ENCODE measurements at regions of chr10 and their contacts with region 1.

Region 1: GRCh38 chr10:119199231-119199992 is 8.0 kb upstream of the GRK5 start:
- DNase-seq: peak; percentile 86
- H3K4me3 Mint-ChIP-seq: peak overlapping the region; percentile 10
- H3K27ac Mint-ChIP-seq: no peak overlapping the region
- H3K4me1 Mint-ChIP-seq: peaks cover 34% of the 10 kb centered on the region
- H3K27me3 Mint-ChIP-seq: no peaks in the 10 kb centered on the region

Region 2: GRCh38 chr10:119139464-119140067 is 59.8 kb before region 1 on chr10:
- intact Hi-C with region 1: loop called (anchors 5 kb)
- DNase-seq: peak; percentile 85
- H3K4me3 Mint-ChIP-seq: no peak overlapping the region
- H3K27ac Mint-ChIP-seq: peak overlapping the region; percentile 55
- H3K4me1 Mint-ChIP-seq: peaks cover 19% of the 10 kb centered on the region
- H3K27me3 Mint-ChIP-seq: no peaks in the 10 kb centered on the region

Region 3: DNA sequence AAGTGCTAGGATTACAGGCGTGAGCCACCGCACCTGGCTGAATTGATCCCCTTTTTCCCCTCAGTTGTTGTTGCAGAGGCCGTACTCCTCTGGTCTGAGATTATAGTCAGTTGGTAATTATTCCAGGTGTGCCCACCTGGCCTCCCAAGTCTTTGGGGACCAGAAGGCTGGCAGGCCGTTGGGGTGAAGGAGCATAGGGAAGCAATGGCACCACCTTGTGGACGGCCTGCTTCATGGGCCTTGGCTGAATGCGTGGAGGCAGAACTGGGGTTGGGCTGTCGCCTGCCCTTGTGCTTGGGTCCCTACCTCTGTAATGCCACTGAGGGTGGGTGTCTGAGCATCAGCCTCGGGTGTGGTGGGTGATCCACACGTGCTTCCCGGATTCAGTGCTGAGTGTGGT is 217.4 kb after region 1 on chr10:
- intact Hi-C with region 1: loop called (anchors 1 kb)
- DNase-seq: peak; percentile 90
- H3K4me3 Mint-ChIP-seq: no peak overlapping the region
- H3K27ac Mint-ChIP-seq: no peak overlapping the region
- H3K4me1 Mint-ChIP-seq: peaks cover 1% of the 10 kb centered on the region
- H3K27me3 Mint-ChIP-seq: no peaks in the 10 kb centered on the region

Region 4: GRCh38 chr10:119445311-119445934 is 246.0 kb after region 1 on chr10:
- intact Hi-C with region 1: loop called (anchors 1 kb)
- DNase-seq: peak; percentile 95
- H3K4me3 Mint-ChIP-seq: no peak overlapping the region
- H3K27ac Mint-ChIP-seq: no peak overlapping the region
- H3K4me1 Mint-ChIP-seq: peaks cover 7% of the 10 kb centered on the region
- H3K27me3 Mint-ChIP-seq: no peaks in the 10 kb centered on the region